ENCODE measurements at regions of chr19 and their contacts with region 1.

Region 1: DNA sequence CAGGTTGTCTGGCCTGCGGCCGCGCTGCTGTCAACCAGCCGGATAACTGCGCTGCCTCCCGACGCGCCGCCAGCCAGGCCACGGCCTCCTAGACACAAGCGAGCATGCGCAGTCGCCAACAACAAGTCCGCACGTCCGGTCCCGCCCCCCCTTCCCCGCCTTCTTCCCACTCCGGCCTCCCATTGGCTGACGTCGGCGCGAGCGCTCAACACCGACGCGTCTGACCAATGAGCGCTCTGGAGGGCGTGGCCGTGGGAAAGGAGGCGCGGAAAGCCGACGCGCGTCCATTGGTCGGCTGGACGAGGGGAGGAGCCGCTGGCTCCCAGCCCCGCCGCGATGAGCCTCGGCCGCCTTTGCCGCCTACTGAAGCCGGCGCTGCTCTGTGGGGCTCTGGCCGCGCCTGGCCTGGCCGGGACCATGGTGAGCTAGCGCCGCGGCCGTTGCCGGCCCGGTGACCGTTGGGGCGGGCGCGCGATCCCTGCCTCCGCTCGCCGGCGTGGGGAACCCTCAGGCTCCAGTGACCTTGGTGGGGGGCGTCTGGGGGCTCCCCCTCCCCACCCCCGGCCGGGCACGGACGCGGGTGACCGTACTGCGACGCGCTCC is at the start of gene GPX4:
- DNase-seq: peak; percentile 100
- ATAC-seq: peak; percentile 86 to 89
- H3K4me3 ChIP-seq: peak within 1 kb of the TSS; percentile 89
- H3K27ac ChIP-seq: peak within 1 kb of the TSS; percentile 98
- H3K4me1 ChIP-seq: peaks cover 8% of the 10 kb centered on the region
- H3K27me3 ChIP-seq: no peaks in the 10 kb centered on the region
- total RNA-seq, gene GPX4: 300 to 374 (median 359) TPM

Region 2: GRCh38 chr19:925526-926322 is 178.1 kb before region 1 on chr19 and contains the start of gene ARID3A:
- intact Hi-C with region 1: no loop called
- DNase-seq: peak; percentile 77 to 92 (median 92)
- ATAC-seq: peak; percentile 79 to 85
- H3K4me3 ChIP-seq: peak within 1 kb of the TSS; percentile 97
- H3K27ac ChIP-seq: peak within 1 kb of the TSS; percentile 26
- H3K4me1 ChIP-seq: no peaks in the 10 kb centered on the region
- H3K27me3 ChIP-seq: no peaks in the 10 kb centered on the region
- total RNA-seq, gene ARID3A: 4.2 to 6.2 (median 5.6) TPM

Region 3: DNA sequence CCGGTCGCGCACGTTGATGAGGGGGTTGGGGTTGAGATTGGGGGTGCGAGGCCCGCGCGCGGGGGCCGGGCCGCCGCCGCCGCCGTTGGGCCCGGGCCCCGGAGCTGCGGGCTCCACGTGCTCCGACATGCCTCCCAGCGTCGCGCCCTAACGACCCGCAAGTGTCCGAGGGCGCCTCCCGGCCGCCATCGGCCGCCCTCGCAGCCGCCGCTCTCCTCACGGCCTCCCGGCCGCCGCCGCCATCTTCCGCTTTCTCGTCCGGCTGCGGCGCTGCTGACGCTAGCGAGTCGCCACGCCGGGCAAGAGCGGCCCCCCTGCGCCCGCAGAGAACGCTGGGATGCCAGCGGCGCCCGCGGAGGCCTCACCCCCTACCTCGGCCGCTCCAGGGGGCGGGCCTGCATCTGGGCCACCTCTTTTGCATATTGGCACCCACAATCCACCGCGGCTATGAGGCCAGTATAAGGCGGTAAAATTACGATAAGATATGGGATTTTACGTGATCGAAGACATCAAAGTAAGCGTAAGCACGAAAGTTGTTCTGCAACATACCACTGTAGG is 82.9 kb before region 1 on chr19 and contains the start of gene TMEM259:
- intact Hi-C with region 1: loop called in 2 of 4 experiments (anchors 5 to 10 kb)
- DNase-seq: peak; percentile 97 to 99 (median 99)
- ATAC-seq: peak; percentile 90 to 94
- H3K4me3 ChIP-seq: peak within 1 kb of the TSS; percentile 81
- H3K27ac ChIP-seq: peak within 1 kb of the TSS; percentile 89
- H3K4me1 ChIP-seq: peaks cover 26% of the 10 kb centered on the region
- H3K27me3 ChIP-seq: no peaks in the 10 kb centered on the region
- total RNA-seq, gene TMEM259: 127 to 161 (median 143) TPM

Region 4: DNA sequence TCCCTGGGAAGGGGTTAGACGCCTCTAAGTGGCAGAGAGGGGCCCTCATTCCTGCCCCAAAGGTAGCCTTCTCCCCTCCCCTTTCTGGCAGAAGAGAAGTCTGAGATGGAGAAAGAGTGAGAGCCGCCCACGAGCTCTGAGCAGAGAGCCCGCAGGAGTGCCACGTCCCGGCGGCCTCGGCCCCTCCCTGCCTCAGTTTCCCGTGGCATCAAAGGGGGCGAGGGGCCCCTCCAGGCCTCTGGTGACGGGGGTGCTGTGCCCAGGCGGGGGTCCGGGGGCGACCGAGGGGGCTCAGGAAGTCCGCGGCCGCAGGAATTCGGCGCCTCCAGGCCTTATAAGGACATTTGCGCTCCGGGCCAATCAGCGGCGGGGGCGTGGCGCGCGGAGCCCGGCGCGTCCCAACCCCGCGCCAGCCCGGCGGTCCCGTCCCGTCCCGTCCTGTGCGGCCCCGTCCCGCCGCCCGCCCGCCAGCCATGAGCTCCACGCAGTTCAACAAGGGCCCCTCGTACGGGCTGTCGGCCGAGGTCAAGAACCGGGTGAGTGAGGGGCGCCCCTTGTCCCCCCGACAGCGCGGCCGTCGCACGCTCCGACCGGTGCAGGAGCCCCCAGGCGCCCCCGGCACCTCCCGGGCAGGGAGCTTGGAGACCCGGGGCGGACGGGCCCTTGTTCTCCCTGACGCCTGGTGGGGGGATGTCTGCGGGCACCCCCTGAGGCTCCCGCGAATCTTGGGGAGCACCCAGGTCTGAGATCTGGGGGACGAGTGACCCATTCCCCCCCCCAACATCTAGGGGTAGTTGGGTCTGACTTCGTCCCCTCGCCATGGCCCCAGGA is 77.4 kb before region 1 on chr19 and contains the start of gene CNN2:
- intact Hi-C with region 1: loop called in 2 of 4 experiments (anchors 5 to 10 kb)
- DNase-seq: peak; percentile 82 to 93 (median 93)
- ATAC-seq: peak; percentile 83 to 86
- H3K4me3 ChIP-seq: peak within 1 kb of the TSS; percentile 58
- H3K27ac ChIP-seq: peak within 1 kb of the TSS; percentile 73
- H3K4me1 ChIP-seq: no peaks in the 10 kb centered on the region
- H3K27me3 ChIP-seq: no peaks in the 10 kb centered on the region
- total RNA-seq, gene CNN2: 57.4 to 75.9 (median 63.8) TPM

Region 5: GRCh38 chr19:1417145-1417544 is 313.3 kb after region 1 on chr19:
- intact Hi-C with region 1: no loop called
- DNase-seq: peak in 2 of 3 donors; percentile 52 to 57
- ATAC-seq: no peak
- H3K4me3 ChIP-seq: no peak overlapping the region
- H3K27ac ChIP-seq: no peak overlapping the region
- H3K4me1 ChIP-seq: peaks cover 30% of the 10 kb centered on the region
- H3K27me3 ChIP-seq: no peaks in the 10 kb centered on the region